Esophagus muscularis mucosa (tissue), 4 donors: ENCODE measurements at regions of chr5 and their contacts with region 1.

Region 1: GRCh38 chr5:72816311-72817145 is at the start of gene TNPO1:
- DNase-seq: peak; percentile 97
- H3K4me3 ChIP-seq: peak within 1 kb of the TSS; percentile 71 to 91 (median 84)
- H3K27ac ChIP-seq: peak within 1 kb of the TSS; percentile 94 to 99 (median 98)
- H3K4me1 ChIP-seq: peaks cover 11 to 33% (median 31%) of the 10 kb centered on the region in 4 donors
- H3K27me3 ChIP-seq: no peaks in the 10 kb centered on the region
- CTCF ChIP-seq: no peak
- EP300 ChIP-seq: no peak
- POLR2A ChIP-seq: peak; percentile 84
- total RNA-seq, gene TNPO1: 67.8 to 81.8 (median 71.3) TPM

Region 2: DNA sequence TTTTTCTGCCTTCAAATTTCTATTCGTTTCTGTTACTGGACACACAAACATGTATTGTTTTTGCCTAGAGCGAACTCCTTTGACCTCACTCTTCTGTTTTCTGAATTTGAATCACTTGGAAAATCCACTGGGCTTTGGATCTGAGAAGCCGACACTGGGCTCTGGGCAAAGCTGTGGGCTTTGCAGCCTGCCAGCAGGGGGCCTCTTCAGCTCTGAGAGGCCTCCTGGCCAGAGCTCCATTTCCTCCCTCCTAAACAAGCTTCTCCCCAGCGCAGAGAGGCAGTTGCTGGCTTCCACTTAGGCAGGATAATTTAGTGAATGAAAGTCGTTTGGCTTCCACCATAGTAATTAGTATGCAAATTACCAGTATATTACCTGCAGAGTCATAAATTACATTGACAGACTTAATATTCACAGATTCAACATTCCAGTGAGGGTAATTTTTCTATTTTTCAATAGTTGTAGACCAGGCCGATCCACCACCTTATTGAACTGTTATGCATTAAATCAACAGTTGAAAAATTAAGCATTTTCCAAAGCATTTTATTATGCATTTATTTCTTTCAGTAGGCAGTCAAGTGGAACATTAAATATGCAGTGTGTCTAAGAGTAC is 205.3 kb before region 1 on chr5:
- intact Hi-C with region 1: loop called (anchors 5 kb)
- DNase-seq: no peak
- H3K4me3 ChIP-seq: no peak overlapping the region
- H3K27ac ChIP-seq: no peak overlapping the region
- H3K4me1 ChIP-seq: peaks cover 0 to 9% (median 4%) of the 10 kb centered on the region in 4 donors
- H3K27me3 ChIP-seq: no peaks in the 10 kb centered on the region
- CTCF ChIP-seq: peak; percentile 89 to 98 (median 90)
- EP300 ChIP-seq: no peak
- POLR2A ChIP-seq: no peak

Region 3: GRCh38 chr5:72752909-72753308 is 63.6 kb before region 1 on chr5:
- intact Hi-C with region 1: no loop called
- DNase-seq: no peak
- H3K4me3 ChIP-seq: no peak overlapping the region
- H3K27ac ChIP-seq: no peak overlapping the region
- H3K4me1 ChIP-seq: no peaks in the 10 kb centered on the region
- H3K27me3 ChIP-seq: no peaks in the 10 kb centered on the region
- CTCF ChIP-seq: no peak
- EP300 ChIP-seq: no peak
- POLR2A ChIP-seq: no peak